ENCODE measurements at regions of chr16 and their contacts with region 1.

Region 1: GRCh38 chr16:71412270-71413160 is 29.3 kb downstream of the TLE7 start:
- DNase-seq: peak; percentile 59 to 73
- H3K4me3 ChIP-seq: no peak overlapping the region
- H3K27ac ChIP-seq: no peak overlapping the region
- H3K4me1 ChIP-seq: peaks cover 0 to 5% of the 10 kb centered on the region in 2 donors
- H3K27me3 ChIP-seq: no peaks in the 10 kb centered on the region
- CTCF ChIP-seq: peak; percentile 67 to 91 (median 76)
- POLR2A ChIP-seq: no peak

Region 2: DNA sequence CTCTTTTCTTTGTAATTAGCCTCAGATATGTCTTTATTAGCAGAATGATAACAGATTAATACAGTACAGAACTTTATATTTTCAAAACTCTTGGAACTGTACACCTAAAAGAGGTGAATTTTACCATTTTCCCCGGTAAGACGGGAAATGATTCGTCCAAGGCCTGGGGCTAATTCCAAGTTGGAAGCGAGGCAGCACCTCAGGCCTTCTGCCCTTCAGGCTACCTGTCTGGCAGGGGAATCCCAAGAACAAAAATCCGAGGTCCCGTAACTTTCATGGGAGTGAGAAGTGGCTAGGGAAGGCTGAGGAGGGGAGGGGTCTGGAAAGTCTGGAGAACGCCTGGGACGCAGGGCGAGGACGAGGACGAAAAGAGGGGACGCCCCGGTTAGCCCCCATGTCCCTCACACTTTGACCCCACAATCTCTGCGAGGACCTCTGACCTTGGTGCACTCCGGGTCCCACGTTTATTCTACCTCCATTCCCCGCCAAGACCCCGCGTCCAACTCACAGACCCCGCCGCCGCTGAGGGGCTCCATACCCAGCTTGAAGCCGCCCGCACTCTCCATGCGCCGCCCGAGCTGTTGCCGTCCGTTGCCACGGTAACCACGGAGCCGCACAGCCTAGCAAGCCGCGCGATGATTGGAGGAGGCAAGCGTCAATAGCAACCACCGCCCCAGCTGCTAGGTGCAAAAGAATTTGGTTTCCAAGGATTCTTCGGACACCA is 182.2 kb before region 1 on chr16 and contains the start of gene HYDIN:
- intact Hi-C with region 1: no loop called
- DNase-seq: peak; percentile 91 to 94
- H3K4me3 ChIP-seq: peak within 1 kb of the TSS in 2 of 3 donors; percentile 21 to 27
- H3K27ac ChIP-seq: no peak within 1 kb of the TSS
- H3K4me1 ChIP-seq: peaks cover 0 to 5% of the 10 kb centered on the region in 2 donors
- H3K27me3 ChIP-seq: no peaks in the 10 kb centered on the region
- CTCF ChIP-seq: no peak
- POLR2A ChIP-seq: peak in 1 of 2 donors; percentile 11
- total RNA-seq, gene HYDIN: 10.1 to 26.3 (median 21.3) TPM

Region 3: DNA sequence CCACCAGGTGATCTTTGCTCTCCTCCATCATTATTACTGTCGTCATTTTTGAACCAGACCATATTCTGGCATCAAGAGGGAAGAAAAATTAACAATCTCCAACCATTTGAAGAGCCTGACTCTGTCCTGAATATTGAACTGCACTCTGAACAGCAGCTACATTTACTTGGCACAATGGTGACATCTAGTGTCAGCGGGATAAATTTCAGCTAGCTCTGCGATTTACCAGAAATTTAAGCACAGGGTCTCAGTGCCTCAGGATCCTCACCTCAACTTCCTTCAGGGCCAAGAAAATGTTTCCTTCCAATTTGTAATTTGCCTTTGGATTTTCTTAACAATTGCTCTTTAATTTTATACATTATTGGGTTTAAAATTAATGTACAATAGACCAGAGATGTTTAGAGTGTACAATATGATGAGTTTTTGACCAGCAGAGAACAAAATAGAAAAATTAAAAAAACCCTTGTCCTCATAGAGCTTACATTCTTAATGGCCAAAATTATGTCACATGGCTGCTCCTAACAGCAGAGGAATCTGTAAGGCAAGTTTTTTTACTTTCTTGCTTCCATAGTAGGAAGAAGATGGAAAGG is 87.4 kb after region 1 on chr16:
- intact Hi-C with region 1: loop called (anchors 5 kb)
- DNase-seq: peak; percentile 20 to 27
- H3K4me3 ChIP-seq: no peak overlapping the region
- H3K27ac ChIP-seq: no peak overlapping the region
- H3K4me1 ChIP-seq: no peaks in the 10 kb centered on the region
- H3K27me3 ChIP-seq: no peaks in the 10 kb centered on the region
- CTCF ChIP-seq: peak; percentile 15 to 67 (median 49)
- POLR2A ChIP-seq: no peak

Region 4: GRCh38 chr16:71515026-71515425 is 102.5 kb after region 1 on chr16:
- intact Hi-C with region 1: no loop called
- DNase-seq: no peak
- H3K4me3 ChIP-seq: no peak overlapping the region
- H3K27ac ChIP-seq: no peak overlapping the region
- H3K4me1 ChIP-seq: no peaks in the 10 kb centered on the region
- H3K27me3 ChIP-seq: no peaks in the 10 kb centered on the region
- CTCF ChIP-seq: no peak
- POLR2A ChIP-seq: no peak

Region 5: GRCh38 chr16:71610936-71611871 is 198.7 kb after region 1 on chr16:
- intact Hi-C with region 1: loop called (anchors 2 kb)
- DNase-seq: peak; percentile 75 to 76
- H3K4me3 ChIP-seq: no peak overlapping the region
- H3K27ac ChIP-seq: no peak overlapping the region
- H3K4me1 ChIP-seq: peaks cover 0 to 6% of the 10 kb centered on the region in 2 donors
- H3K27me3 ChIP-seq: no peaks in the 10 kb centered on the region
- CTCF ChIP-seq: peak; percentile 78 to 93 (median 86)
- POLR2A ChIP-seq: no peak

Region 6: DNA sequence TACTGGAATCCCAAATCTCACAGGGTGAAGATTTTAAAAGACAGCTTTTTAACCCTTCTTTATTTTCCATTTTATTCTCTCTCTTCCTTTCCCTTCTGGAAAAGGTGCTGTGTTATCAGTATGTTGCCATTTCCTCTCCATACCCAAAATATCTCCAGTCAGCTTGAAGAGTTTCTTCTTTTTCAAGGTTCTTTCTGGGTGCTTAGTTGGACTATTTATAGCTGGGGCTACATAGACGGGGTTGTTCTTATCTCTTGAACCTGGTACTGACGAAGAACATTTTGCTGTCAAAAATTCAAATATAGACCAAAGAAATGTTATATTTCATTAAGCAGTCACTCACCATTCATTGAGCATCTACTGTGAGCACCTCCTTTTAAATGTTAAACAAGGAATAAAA is 531.4 kb after region 1 on chr16:
- intact Hi-C with region 1: no loop called
- DNase-seq: no peak
- H3K4me3 ChIP-seq: no peak overlapping the region
- H3K27ac ChIP-seq: no peak overlapping the region
- H3K4me1 ChIP-seq: peaks cover 0 to 9% of the 10 kb centered on the region in 2 donors
- H3K27me3 ChIP-seq: no peaks in the 10 kb centered on the region
- CTCF ChIP-seq: no peak
- POLR2A ChIP-seq: no peak